ENCODE measurements at regions of chr12 and their contacts with region 1.

Region 1: GRCh38 chr12:607526-608001 is 55.7 kb downstream of the NINJ2 start:
- DNase-seq: no peak
- H3K4me3 Mint-ChIP-seq: no peak overlapping the region
- H3K27ac Mint-ChIP-seq: no peak overlapping the region
- H3K4me1 Mint-ChIP-seq: peaks cover 25% of the 10 kb centered on the region
- H3K27me3 Mint-ChIP-seq: no peaks in the 10 kb centered on the region

Region 2: DNA sequence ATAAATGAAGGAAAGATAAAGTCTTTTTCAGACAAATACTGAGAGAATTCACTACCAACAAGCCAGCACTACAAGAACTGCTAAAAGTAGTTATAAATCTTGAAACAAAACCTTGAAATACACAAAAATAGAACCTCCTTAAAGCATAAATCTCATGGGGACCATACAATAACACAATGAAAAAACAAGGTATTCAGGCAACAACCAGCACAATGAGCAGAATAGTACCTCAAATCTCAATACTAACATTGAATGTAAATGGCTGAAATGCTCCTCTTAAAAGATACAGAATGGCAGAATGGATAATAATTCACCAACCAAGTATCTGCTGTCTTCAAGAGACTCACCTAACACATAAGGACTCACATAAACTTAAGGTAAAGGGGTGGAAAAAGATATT is 548.7 kb before region 1 on chr12:
- CTCF ChIA-PET with region 1: no interaction called
- POLR2A ChIA-PET with region 1: no interaction called
- intact Hi-C with region 1: no loop called
- DNase-seq: no peak
- H3K4me3 Mint-ChIP-seq: no peak overlapping the region
- H3K27ac Mint-ChIP-seq: no peak overlapping the region
- H3K4me1 Mint-ChIP-seq: no peaks in the 10 kb centered on the region
- H3K27me3 Mint-ChIP-seq: peaks cover 63% of the 10 kb centered on the region

Region 3: DNA sequence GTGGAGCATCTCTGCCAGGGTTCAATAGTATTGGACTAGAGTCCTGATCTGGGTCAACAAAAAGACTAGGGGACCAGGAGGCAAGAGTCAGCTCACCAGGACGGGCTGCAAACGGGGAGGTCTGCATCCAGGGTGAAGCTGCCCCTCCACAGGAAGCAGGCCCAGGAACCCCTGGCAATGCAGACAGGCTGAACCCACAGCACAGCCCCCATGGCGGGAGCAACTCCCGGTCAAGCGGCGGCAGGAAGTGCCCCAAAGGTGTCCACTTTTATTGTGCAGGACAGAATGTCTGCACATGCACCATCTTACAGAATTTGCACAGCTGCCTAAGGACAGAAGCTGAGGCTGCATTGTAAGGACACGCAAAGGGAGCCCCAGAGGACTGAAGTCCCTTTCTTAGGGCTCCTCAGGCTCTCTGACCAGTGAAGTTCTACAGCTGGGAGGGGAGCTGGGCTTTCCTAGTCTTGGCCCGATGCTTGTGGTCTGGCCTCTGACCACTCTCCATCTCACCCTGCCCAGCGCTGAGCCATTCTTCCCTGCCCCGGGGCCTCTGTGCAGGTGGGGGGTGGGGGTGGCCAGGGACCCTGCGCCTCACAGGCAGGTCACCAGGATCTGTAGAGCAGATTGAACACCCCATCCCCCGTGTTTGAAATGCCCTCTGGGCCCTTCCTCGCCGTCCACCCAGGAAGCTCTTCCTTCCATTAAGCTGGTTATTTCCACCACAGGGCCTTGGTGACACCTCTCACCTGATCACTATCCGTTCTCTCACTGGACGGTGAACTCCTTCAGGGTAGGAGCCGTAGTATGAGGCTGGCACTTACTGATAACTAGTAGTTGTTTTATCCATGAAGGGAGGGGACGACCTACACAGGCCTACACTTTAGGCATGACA is 20.2 kb before region 1 on chr12:
- CTCF ChIA-PET with region 1: no interaction called
- POLR2A ChIA-PET with region 1: no interaction called
- intact Hi-C with region 1: loop called (anchors 2 kb)
- DNase-seq: no peak
- H3K4me3 Mint-ChIP-seq: no peak overlapping the region
- H3K27ac Mint-ChIP-seq: no peak overlapping the region
- H3K4me1 Mint-ChIP-seq: peaks cover 3% of the 10 kb centered on the region
- H3K27me3 Mint-ChIP-seq: no peaks in the 10 kb centered on the region

Region 4: DNA sequence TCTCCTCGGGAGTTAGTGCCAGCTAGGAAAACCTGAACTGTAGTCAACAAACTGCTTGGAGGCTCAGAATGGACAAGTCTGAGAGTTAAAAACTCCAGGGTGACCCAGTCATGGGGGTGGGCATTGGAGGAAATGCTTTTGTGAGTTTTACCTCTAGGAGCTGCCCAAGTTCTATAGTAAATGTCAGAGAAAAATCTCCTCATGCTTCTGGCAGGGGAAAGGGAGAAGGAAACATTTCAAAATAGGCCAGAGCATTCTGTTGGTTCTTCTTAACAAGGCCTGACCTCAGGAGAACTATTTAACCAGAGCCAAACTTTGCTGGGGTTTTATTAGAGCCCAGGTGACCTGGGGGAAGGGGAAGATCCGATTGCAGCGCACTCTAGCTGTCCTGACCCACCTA is 43.4 kb after region 1 on chr12:
- CTCF ChIA-PET with region 1: no interaction called
- POLR2A ChIA-PET with region 1: no interaction called
- intact Hi-C with region 1: no loop called
- DNase-seq: no peak
- H3K4me3 Mint-ChIP-seq: no peak overlapping the region
- H3K27ac Mint-ChIP-seq: no peak overlapping the region
- H3K4me1 Mint-ChIP-seq: no peaks in the 10 kb centered on the region
- H3K27me3 Mint-ChIP-seq: no peaks in the 10 kb centered on the region

Region 5: DNA sequence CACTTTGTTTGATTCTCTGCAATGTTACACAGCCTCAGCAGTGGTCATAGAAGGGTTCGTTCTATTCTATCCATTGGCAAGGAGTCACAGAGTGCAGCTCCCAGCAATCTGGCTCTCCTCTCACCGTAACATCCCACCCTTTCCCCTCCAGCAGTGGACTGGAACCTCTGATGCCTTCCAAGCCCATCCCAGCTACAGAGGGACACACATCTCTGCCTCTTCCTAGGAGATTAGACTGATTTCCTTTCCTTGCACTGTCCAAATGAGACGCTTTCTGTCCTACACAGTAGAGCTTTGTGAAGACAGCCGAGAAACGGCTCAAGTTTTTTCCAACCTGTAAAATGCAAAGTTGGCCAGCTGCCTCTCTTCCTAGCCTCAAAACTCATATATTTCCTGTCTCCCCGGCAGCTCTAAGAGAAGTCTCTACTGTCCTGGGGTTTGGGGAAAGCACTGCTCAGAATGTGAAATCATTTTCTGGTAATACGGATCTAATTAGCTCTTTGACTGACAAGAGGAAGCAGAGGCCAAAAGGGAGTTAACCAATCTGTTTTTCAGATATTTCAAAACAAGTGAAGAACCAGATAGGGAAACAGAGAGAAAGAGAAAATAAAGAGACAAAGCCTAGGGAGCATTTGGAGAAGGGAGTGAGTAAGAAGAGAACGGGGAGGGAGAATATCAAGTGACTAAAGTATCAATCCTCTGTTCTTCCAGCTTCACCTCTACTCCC is 55.2 kb after region 1 on chr12:
- CTCF ChIA-PET with region 1: no interaction called
- POLR2A ChIA-PET with region 1: no interaction called
- intact Hi-C with region 1: no loop called
- DNase-seq: peak; percentile 4
- H3K4me3 Mint-ChIP-seq: peak overlapping the region; percentile 52
- H3K27ac Mint-ChIP-seq: peak overlapping the region; percentile 65
- H3K4me1 Mint-ChIP-seq: peaks cover 50% of the 10 kb centered on the region
- H3K27me3 Mint-ChIP-seq: no peaks in the 10 kb centered on the region

Measured in activated CD4-positive, alpha-beta memory T cell treated with anti-CD3 and anti-CD28 coated beads for 36 hours (primary cell).